SK-N-SH (cell line): ENCODE measurements at regions of chr9 and their contacts with region 1.

Region 1: GRCh38 chr9:130243015-130243734 is 22.4 kb upstream of the HMCN2 start:
- DNase-seq: peak; percentile 85
- H3K4me3 ChIP-seq: peak overlapping the region in 1 of 2 experiments; percentile 51; a peak in 1 of 4 replicates
- H3K27ac ChIP-seq: peak overlapping the region in 1 of 2 experiments; percentile 35; a peak in 1 of 4 replicates
- H3K4me1 ChIP-seq: peaks cover 0 to 21% of the 10 kb centered on the region in 2 experiments; a peak in 1 of 4 replicates
- H3K27me3 ChIP-seq: no peaks in the 10 kb centered on the region
- CTCF ChIP-seq: peak; percentile 88
- EP300 ChIP-seq: no peak
- RAD21 ChIP-seq: peak; percentile 74

Region 2: DNA sequence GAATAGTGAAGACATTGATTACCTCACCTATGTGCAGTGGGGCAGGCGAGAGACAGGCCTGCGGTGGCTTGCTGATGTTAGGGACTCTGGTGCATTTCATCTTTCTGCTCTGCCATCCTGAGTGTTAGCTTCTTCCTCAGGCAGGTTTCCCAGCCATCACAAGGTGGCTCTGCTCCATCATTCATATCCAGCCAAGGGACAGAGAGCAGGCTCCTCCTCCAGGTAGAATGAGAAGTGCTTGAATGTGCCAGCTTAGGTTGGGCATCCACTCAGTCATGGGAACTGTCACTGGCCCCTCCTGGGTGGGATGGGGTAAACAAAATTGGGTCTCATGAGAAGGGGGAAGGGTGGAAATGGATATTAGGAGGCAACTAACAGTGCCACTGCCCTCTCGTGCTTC is 164.6 kb before region 1 on chr9:
- CTCF ChIA-PET with region 1: no interaction called
- POLR2A ChIA-PET with region 1: no interaction called
- DNase-seq: no peak
- H3K4me3 ChIP-seq: no peak overlapping the region
- H3K27ac ChIP-seq: no peak overlapping the region
- H3K4me1 ChIP-seq: no peaks in the 10 kb centered on the region
- H3K27me3 ChIP-seq: no peaks in the 10 kb centered on the region
- CTCF ChIP-seq: no peak
- EP300 ChIP-seq: no peak
- RAD21 ChIP-seq: no peak

Region 3: DNA sequence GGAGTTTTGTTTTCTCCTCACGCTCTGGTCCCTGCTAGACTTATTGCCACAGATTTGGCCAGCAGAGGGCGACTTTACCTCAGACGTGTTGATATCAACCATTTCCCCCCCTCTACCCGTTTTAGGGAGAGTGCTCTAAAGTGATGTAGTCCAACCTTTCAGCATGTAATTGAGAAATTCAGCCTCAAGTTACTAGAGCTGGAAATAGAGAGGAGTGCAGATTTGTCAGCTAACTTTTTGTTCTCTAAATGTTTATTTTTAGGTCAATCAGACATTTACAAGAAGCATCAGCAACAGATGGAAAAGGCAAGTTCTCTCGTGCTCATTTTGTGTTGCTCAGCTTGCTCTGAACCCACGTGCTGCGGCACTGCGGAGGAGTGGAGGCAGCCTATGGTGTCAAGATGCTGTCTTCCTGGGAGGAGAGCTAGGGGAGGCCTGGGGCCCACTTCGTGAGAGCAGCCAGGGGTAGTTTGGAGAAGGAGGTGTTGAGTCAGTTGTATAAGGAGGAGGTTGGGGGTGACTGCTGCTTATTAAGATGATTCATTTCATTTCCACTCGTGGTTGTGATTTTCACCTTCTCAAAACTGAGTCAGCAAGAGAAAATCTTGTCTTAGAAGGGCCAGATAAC is 135.8 kb before region 1 on chr9:
- CTCF ChIA-PET with region 1: interaction called, 73 read pairs
- POLR2A ChIA-PET with region 1: no interaction called
- DNase-seq: peak; percentile 80
- H3K4me3 ChIP-seq: no peak overlapping the region; a peak in 1 of 4 replicates
- H3K27ac ChIP-seq: peak overlapping the region in 1 of 2 experiments; percentile 16; a peak in 1 of 4 replicates
- H3K4me1 ChIP-seq: peaks cover 0 to 18% of the 10 kb centered on the region in 2 experiments; a peak in 1 of 4 replicates
- H3K27me3 ChIP-seq: no peaks in the 10 kb centered on the region
- CTCF ChIP-seq: peak; percentile 90
- EP300 ChIP-seq: no peak
- RAD21 ChIP-seq: peak; percentile 95

Region 4: DNA sequence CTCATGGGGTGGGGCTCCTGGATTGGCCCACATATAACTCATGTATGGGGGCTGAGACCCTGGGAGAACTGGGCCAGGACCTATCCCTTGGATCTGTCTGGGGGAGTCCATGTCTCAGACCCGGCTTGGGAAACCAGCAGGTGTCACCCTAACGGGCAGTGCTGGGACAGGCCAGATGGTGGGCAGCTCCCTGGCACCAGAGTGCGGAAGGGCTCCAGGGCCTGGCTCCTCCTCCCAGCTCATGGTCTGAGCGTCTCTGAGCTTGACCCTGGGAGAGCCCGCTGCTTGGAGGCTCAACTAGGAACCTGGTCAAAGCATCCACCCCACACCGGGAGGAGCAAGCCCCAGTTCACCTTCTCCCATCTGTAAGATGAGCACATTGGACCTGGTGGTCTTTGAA is 86.5 kb before region 1 on chr9:
- CTCF ChIA-PET with region 1: interaction called, 11 read pairs
- POLR2A ChIA-PET with region 1: no interaction called
- DNase-seq: peak; percentile 70
- H3K4me3 ChIP-seq: no peak overlapping the region
- H3K27ac ChIP-seq: no peak overlapping the region
- H3K4me1 ChIP-seq: no peaks in the 10 kb centered on the region; a peak in 1 of 4 replicates
- H3K27me3 ChIP-seq: no peaks in the 10 kb centered on the region
- CTCF ChIP-seq: peak; percentile 33; the same call in 1 of the 2 replicates
- EP300 ChIP-seq: no peak
- RAD21 ChIP-seq: peak; percentile 55

Region 5: DNA sequence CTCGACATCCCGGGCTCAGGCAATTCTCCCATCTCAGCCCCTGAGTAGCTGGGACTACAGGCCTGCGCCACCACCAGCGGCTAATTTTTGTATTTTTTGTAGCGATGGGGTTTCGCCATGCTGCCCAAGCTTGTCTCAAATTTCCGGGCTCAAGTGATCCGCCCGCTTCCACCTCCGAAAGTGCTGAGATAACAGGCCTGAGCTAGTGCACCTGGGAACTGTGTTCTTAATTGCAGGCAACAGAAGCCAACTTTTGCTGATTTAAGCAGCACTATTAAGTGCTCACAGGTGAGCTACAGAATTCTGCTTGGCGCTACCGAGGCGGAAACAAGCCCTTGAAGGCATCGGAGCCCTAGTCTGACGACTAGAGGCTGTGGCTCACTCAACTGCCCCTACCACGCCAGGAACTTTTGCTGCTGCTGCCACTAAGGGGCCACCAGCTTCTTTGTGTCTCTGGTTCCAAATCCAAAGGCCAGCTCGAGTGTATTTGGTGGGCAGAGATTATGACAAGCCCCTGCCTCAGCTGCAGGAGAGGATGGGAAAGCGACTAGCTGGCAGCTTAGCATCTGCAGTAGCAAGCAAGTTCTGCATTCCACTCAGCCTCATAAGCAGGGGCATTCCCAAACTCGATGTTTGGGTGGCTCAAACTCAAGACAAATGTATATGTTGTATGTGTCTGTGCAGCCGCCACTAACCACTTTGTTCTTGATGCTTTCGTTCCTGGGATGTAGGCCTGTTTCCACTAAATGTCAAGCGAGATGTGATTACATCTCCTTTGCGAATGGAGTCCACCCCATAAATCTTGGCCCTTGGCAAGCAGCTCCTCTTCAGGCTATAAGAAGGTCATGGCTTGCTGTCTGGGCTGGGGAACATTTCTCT is 11.8 kb after region 1 on chr9:
- CTCF ChIA-PET with region 1: interaction called, 73 read pairs
- POLR2A ChIA-PET with region 1: no interaction called
- DNase-seq: no peak
- H3K4me3 ChIP-seq: no peak overlapping the region
- H3K27ac ChIP-seq: no peak overlapping the region
- H3K4me1 ChIP-seq: peaks cover 0 to 6% of the 10 kb centered on the region in 2 experiments; a peak in 1 of 4 replicates
- H3K27me3 ChIP-seq: no peaks in the 10 kb centered on the region; the same call in 1 of the 2 replicates
- CTCF ChIP-seq: no peak
- EP300 ChIP-seq: no peak
- RAD21 ChIP-seq: no peak

Region 6: DNA sequence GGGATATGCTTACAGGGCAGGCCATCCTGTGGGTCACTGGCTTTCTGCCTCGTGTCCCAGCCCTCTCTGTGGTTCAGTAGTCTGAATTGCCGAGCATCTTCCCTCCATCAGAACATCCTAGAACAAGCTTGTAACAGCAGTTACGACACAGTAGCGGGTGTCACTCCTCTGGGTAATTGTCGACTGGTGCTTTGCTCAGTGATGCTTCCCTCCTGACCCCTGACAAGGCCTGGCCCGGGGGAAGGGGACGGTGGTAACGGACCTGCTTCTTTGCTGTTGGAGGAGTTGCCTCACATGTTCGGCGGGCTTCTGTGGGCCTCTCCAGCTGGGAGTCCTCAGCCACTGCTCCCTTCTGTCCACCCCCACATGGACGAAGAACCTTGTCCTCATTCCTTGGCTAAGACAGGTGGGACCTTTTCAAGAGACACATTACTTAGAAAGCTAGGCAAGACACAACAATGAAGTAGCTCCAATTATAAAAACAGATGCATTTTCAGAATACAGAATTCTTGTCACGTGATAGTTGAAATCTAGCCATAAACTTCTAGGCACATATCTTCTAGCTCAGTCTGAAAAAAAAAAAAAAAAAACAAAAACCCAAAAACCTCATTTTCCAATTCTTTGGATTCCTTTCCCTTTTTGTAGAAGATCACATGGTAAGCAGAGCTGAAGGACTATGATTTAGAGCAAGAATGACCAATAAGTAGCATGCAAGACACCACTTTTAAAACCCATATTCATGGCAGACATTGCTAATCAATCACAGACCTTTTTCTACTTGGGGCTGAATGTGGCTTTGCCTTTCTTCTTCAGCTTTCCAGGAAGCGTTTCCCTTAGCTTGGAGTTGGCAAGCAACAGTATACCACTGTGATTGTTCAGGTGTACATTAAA is 47.4 kb after region 1 on chr9:
- CTCF ChIA-PET with region 1: interaction called, 15 read pairs
- POLR2A ChIA-PET with region 1: interaction called, 3 read pairs
- DNase-seq: no peak
- H3K4me3 ChIP-seq: no peak overlapping the region
- H3K27ac ChIP-seq: peak overlapping the region in 1 of 2 experiments; percentile 67; a peak in 2 of 4 replicates
- H3K4me1 ChIP-seq: peaks cover 0 to 30% of the 10 kb centered on the region in 2 experiments; a peak in 2 of 4 replicates
- H3K27me3 ChIP-seq: peaks cover 18% of the 10 kb centered on the region; the same call in 1 of the 2 replicates
- CTCF ChIP-seq: no peak
- EP300 ChIP-seq: no peak
- RAD21 ChIP-seq: no peak

Region 7: DNA sequence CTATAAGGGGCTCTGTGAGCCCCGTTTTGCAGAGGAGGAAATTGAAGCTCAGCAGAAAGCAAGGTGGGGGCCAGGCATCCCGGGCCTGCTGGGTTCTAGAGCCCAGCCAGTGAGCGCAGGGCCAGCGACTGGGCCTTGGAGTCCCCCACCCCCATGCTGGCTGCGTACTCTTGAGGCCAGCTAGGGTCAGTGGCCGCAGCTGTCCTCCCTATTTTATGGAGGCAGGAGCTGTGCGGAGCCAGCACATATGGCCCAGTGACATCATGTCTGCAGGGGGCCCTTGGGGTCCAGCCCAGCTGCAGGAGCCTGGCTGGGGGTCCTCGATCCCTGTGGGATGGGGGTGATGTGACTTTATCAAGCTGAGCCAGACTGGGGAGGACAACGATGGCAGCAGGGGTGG is 93.7 kb after region 1 on chr9:
- CTCF ChIA-PET with region 1: interaction called, 44 read pairs
- POLR2A ChIA-PET with region 1: interaction called, 3 read pairs
- DNase-seq: no peak
- H3K4me3 ChIP-seq: no peak overlapping the region
- H3K27ac ChIP-seq: no peak overlapping the region
- H3K4me1 ChIP-seq: peaks cover 0 to 34% of the 10 kb centered on the region in 2 experiments; a peak in 1 of 4 replicates
- H3K27me3 ChIP-seq: no peaks in the 10 kb centered on the region
- CTCF ChIP-seq: no peak
- EP300 ChIP-seq: no peak
- RAD21 ChIP-seq: no peak

Region 8: DNA sequence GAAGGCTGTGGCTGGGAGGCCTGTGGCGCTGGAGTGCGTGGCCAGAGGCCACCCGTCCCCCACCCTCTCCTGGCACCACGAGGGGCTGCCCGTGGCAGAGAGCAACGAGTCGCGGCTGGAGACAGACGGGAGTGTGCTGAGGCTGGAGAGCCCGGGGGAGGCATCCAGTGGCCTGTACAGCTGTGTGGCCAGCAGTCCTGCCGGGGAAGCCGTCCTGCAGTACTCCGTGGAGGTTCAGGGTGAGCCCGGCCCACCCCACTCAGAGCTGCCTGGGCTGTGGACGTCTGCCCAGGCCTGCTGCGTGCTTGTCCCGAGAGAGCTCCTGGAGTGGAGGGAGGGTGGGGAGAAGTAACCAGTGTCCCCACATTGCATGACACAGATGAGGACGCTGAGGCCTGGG is 111.6 kb after region 1 on chr9:
- CTCF ChIA-PET with region 1: no interaction called
- POLR2A ChIA-PET with region 1: no interaction called
- DNase-seq: no peak
- H3K4me3 ChIP-seq: no peak overlapping the region
- H3K27ac ChIP-seq: no peak overlapping the region
- H3K4me1 ChIP-seq: no peaks in the 10 kb centered on the region
- H3K27me3 ChIP-seq: no peaks in the 10 kb centered on the region
- CTCF ChIP-seq: no peak
- EP300 ChIP-seq: no peak
- RAD21 ChIP-seq: no peak